GM10248 (cell line): ENCODE measurements at regions of chrX and their contacts with region 1.

Region 1: GRCh38 chrX:154918060-154918483 is 31.9 kb downstream of the F8A1 start:
- DNase-seq: peak; percentile 31
- CTCF ChIP-seq: peak; percentile 52

Region 2: DNA sequence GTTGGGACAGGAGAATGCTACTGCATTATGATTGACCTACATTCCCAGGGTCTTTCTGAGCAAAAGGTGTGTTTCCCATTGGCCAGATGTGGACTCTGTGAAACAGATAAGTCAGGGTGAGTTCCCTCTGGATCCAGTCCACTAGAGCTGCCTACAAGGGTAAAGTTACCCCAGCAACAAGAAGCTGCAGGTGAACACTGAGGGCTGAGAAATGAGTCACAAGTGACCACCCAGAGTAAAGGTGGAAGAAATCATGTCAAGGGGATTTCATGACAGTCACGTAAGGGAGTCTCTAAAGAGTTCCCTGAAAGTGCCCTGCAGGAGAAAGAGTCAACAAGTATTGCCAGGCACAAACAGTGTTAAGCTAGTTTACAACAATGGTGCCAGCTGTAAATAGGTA is 15.7 kb before region 1 on chrX:
- CTCF ChIA-PET with region 1: interaction called, 11 read pairs
- POLR2A ChIA-PET with region 1: no interaction called
- DNase-seq: peak; percentile 6
- CTCF ChIP-seq: no peak